ENCODE measurements at regions of chr17 and their contacts with region 1.

Region 1: DNA sequence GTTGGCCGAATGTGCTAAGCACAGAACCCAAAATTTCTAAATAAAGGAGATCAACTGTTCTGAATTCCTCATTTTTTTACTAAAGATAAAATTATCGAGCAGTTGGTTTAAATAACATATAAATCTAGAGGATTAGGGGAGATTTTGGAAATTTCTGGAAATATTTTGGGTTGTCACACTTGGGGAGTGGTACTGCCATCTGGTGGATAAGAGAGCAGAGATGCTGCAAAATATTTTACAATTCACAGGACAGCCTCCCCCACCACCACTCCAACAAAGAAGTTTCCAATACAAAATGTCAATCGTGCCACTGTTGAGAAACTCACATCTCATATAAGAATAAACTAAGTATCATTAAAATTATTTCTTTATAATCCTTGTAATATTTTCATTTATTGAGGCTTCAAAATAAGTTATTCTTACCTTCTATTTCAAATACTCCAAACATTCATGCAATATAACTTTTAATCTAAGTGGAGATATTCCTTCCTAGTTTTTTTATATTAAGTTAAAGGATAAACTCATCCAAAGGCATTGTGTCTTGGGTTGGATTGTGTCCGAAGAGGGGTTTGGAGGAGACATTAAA is 17.0 kb upstream of the ABCA8 start:
- DNase-seq: peak; percentile 43
- ATAC-seq: no peak
- H3K4me3 ChIP-seq: no peak overlapping the region
- H3K27ac ChIP-seq: no peak overlapping the region
- H3K4me1 ChIP-seq: 0 out of 2 replicates have a peak, but pooled peaks cover 10% of the 10 kb centered on the region
- H3K27me3 ChIP-seq: no peaks in the 10 kb centered on the region
- CTCF ChIP-seq: peak; percentile 73
- EP300 ChIP-seq: peak in 1 of 2 experiments; percentile 38; a peak in 1 of 4 replicates
- POLR2A ChIP-seq: no peak
- RAD21 ChIP-seq: peak; percentile 85

Region 2: DNA sequence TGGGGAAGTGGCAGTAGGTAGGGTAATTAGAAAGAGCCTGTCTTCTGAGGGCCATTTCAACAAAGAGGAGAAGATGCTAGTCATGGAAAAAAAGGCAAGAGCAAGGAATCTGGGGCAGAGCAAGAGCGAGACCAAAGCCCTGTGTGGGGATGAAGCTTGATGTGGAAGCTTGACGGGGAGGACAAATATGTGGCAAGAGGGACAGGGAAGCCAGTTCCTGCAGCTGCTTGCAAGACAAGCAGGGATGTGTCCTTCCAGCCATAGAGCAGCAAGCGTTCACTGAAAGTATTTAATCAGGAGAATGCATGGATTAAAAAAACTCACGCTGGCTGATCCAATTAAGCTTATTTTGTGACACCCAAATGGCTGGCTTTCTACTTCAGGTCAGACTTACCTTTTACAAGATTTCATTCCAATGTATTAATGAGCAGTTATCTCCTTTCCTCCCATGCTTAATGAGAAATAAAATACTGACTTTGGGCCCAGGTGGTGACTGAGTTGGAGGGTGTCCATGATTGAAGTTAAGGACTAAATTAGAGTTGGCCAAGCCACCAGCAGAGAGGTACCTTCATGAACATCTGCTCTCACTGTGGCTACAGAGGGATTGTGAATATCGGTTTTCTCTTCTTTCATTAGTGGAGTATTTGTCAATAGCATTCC is 93.9 kb before region 1 on chr17:
- CTCF ChIA-PET with region 1: no interaction called
- POLR2A ChIA-PET with region 1: no interaction called
- in situ Hi-C with region 1: no loop called
- intact Hi-C with region 1: no loop called
- DNase-seq: no peak
- ATAC-seq: no peak
- H3K4me3 ChIP-seq: no peak overlapping the region
- H3K27ac ChIP-seq: no peak overlapping the region
- H3K4me1 ChIP-seq: no peaks in the 10 kb centered on the region
- H3K27me3 ChIP-seq: peaks cover 0 to 10% of the 10 kb centered on the region in 2 experiments; a peak in 2 of 5 replicates
- CTCF ChIP-seq: no peak
- EP300 ChIP-seq: no peak
- POLR2A ChIP-seq: no peak
- RAD21 ChIP-seq: no peak

Region 3: GRCh38 chr17:70544317-70544716 is 1572.1 kb after region 1 on chr17:
- CTCF ChIA-PET with region 1: no interaction called
- POLR2A ChIA-PET with region 1: no interaction called
- in situ Hi-C with region 1: no loop called
- intact Hi-C with region 1: loop called (anchors 5 kb)
- DNase-seq: no peak
- ATAC-seq: no peak
- H3K4me3 ChIP-seq: no peak overlapping the region
- H3K27ac ChIP-seq: no peak overlapping the region
- H3K4me1 ChIP-seq: no peaks in the 10 kb centered on the region
- H3K27me3 ChIP-seq: no peaks in the 10 kb centered on the region
- CTCF ChIP-seq: no peak
- EP300 ChIP-seq: no peak
- POLR2A ChIP-seq: no peak
- RAD21 ChIP-seq: no peak

Measured in HepG2 (cell line).